BJ (cell line): ENCODE measurements at regions of chr2 and their contacts with region 1.

Region 1: DNA sequence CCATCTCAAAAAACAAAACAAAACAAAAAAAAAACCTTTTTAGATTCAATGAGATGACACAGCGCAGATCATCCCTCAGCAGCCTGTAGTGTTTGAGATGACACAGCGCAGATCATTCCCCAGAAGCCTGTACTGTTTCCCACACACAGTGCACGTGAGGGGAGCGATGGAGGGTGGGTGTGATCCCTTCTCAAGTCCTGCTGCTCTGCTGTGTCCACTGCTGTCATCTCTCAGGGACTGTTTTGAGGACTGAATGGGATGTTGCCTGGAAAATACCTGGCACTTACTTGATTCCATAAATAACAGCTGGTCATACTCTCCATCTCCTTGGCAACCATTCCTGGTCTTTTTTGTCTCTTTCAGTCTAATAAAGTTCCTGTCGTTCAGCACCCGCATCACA is 25.7 kb downstream of the TGOLN2 start:
- DNase-seq: no peak
- H3K4me3 ChIP-seq: no peak overlapping the region
- H3K27me3 ChIP-seq: no peaks in the 10 kb centered on the region
- CTCF ChIP-seq: no peak

Region 2: GRCh38 chr2:85053802-85054201 is 248.3 kb before region 1 on chr2:
- CTCF ChIA-PET with region 1: interaction called, 17 read pairs
- POLR2A ChIA-PET with region 1: no interaction called
- DNase-seq: peak; percentile 24
- H3K4me3 ChIP-seq: no peak overlapping the region
- H3K27me3 ChIP-seq: no peaks in the 10 kb centered on the region
- CTCF ChIP-seq: no peak

Region 3: GRCh38 chr2:85061896-85062295 is 240.2 kb before region 1 on chr2:
- CTCF ChIA-PET with region 1: interaction called, 195 read pairs
- POLR2A ChIA-PET with region 1: no interaction called
- DNase-seq: no peak
- H3K4me3 ChIP-seq: no peak overlapping the region
- H3K27me3 ChIP-seq: peaks cover 4% of the 10 kb centered on the region; the same call in 1 of the 2 replicates
- CTCF ChIP-seq: no peak

Region 4: DNA sequence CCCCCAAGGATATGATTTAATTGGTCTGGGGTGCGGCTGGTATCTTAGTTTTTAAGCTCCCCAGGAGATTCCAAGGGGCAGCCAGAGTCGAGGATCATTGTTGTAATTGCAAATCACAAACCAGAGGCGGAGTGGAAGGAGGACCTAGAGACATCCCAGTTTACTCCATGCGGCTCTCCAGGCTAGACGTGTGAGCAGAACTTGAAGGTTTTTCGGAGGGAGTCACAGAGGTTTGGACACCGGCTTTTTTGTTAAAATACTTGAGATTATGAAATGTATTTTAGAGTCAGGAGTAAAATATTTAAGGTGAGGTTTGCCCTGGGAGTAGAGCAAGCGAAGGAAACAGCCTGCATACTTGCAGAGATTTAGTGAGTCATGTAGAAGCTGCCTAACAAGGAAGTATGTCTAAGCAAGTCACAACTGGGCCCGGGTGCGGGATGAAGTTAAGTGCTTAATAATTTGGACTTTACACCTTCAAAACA is 13.8 kb before region 1 on chr2:
- CTCF ChIA-PET with region 1: interaction called, 48 read pairs
- POLR2A ChIA-PET with region 1: no interaction called
- DNase-seq: no peak
- H3K4me3 ChIP-seq: no peak overlapping the region
- H3K27me3 ChIP-seq: no peaks in the 10 kb centered on the region
- CTCF ChIP-seq: no peak

Region 5: GRCh38 chr2:85318222-85319074 is 16.3 kb after region 1 on chr2:
- CTCF ChIA-PET with region 1: interaction called, 26 read pairs
- POLR2A ChIA-PET with region 1: no interaction called
- DNase-seq: peak; percentile 47
- H3K4me3 ChIP-seq: no peak overlapping the region
- H3K27me3 ChIP-seq: no peaks in the 10 kb centered on the region
- CTCF ChIP-seq: no peak